ENCODE measurements at regions of chr4 and their contacts with region 1.

Region 1: GRCh38 chr4:10582059-10582686 is 102.4 kb downstream of the CLNK start:
- DNase-seq: peak; percentile 69
- ATAC-seq: peak; percentile 82
- H3K4me3 ChIP-seq: no peak overlapping the region
- H3K27ac ChIP-seq: no peak overlapping the region
- H3K4me1 ChIP-seq: no peaks in the 10 kb centered on the region
- H3K27me3 ChIP-seq: peaks cover 4% of the 10 kb centered on the region
- CTCF ChIP-seq: peak; percentile 99
- POLR2A ChIP-seq: 0 out of 2 replicates have a peak, but pooled peaks have one; percentile 35
- RAD21 ChIP-seq: peak; percentile 99

Region 2: GRCh38 chr4:10212400-10212799 is 369.8 kb before region 1 on chr4:
- CTCF ChIA-PET with region 1: no interaction called
- POLR2A ChIA-PET with region 1: no interaction called
- dilution Hi-C with region 1: no loop called
- in situ Hi-C with region 1: no loop called
- intact Hi-C with region 1: no loop called
- DNase-seq: no peak
- ATAC-seq: no peak
- H3K4me3 ChIP-seq: no peak overlapping the region
- H3K27ac ChIP-seq: no peak overlapping the region
- H3K4me1 ChIP-seq: no peaks in the 10 kb centered on the region
- H3K27me3 ChIP-seq: no peaks in the 10 kb centered on the region
- CTCF ChIP-seq: no peak
- POLR2A ChIP-seq: no peak
- RAD21 ChIP-seq: no peak

Region 3: GRCh38 chr4:10593130-10593529 is 11.0 kb after region 1 on chr4:
- CTCF ChIA-PET with region 1: no interaction called
- POLR2A ChIA-PET with region 1: no interaction called
- dilution Hi-C with region 1: no loop called
- in situ Hi-C with region 1: no loop called
- intact Hi-C with region 1: no loop called
- DNase-seq: no peak
- ATAC-seq: no peak
- H3K4me3 ChIP-seq: no peak overlapping the region
- H3K27ac ChIP-seq: no peak overlapping the region
- H3K4me1 ChIP-seq: peaks cover 3% of the 10 kb centered on the region; the same call in 1 of the 2 replicates
- H3K27me3 ChIP-seq: no peaks in the 10 kb centered on the region
- CTCF ChIP-seq: no peak
- POLR2A ChIP-seq: no peak
- RAD21 ChIP-seq: no peak

Region 4: GRCh38 chr4:10762561-10762960 is 180.4 kb after region 1 on chr4:
- CTCF ChIA-PET with region 1: no interaction called
- POLR2A ChIA-PET with region 1: no interaction called
- dilution Hi-C with region 1: no loop called
- in situ Hi-C with region 1: no loop called
- intact Hi-C with region 1: loop called (anchors 5 kb)
- DNase-seq: peak; percentile 91
- ATAC-seq: peak; percentile 86
- H3K4me3 ChIP-seq: no peak overlapping the region
- H3K27ac ChIP-seq: no peak overlapping the region
- H3K4me1 ChIP-seq: peaks cover 3% of the 10 kb centered on the region
- H3K27me3 ChIP-seq: no peaks in the 10 kb centered on the region
- CTCF ChIP-seq: no peak
- POLR2A ChIP-seq: no peak
- RAD21 ChIP-seq: no peak

Region 5: GRCh38 chr4:10917566-10917965 is 335.4 kb after region 1 on chr4:
- CTCF ChIA-PET with region 1: no interaction called
- POLR2A ChIA-PET with region 1: no interaction called
- dilution Hi-C with region 1: no loop called
- in situ Hi-C with region 1: no loop called
- intact Hi-C with region 1: loop called (anchors 1 kb)
- DNase-seq: no peak
- ATAC-seq: no peak
- H3K4me3 ChIP-seq: no peak overlapping the region
- H3K27ac ChIP-seq: no peak overlapping the region
- H3K4me1 ChIP-seq: no peaks in the 10 kb centered on the region
- H3K27me3 ChIP-seq: no peaks in the 10 kb centered on the region
- CTCF ChIP-seq: no peak
- POLR2A ChIP-seq: no peak
- RAD21 ChIP-seq: no peak

Region 6: DNA sequence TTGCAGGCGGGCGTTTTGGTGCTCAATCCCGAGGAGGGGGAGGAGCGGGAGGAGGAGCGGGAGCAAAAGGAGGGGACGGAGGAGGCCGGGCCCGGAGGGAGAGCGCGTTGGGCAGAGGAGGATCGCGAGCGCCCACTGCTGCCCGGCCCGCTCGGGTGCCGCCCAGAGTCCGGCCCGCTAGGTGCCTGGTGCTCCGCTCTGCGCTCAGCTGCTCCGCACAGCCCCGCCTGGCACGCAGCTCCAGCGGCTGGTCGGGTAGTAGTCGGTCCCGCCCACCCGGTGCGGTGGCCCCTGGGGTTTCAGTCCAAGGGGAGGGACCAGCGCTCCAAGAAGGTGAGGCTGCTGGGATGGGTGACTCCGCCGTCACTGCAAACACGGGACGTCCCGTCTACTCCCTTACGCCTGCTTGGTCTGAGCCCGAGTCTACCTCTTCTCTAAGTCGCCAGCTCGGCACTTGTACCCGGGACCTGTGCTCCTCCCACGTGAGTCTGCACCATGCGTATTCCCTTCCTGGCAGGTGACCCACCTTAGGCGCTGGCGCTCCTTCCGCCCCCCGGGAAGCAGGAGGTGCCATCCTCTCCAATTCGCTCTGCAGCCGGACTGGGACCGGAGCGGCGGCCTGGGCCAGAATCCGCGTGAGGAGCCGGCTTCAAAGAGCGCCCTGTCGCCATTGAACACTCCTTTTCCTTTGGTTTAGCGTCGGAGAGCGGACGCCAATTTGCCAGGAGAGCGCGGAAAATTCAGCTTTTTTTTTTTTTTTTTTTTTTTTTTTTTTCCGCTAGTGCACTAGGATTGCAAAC is 846.9 kb after region 1 on chr4:
- CTCF ChIA-PET with region 1: no interaction called
- POLR2A ChIA-PET with region 1: no interaction called
- dilution Hi-C with region 1: no loop called
- in situ Hi-C with region 1: no loop called
- intact Hi-C with region 1: loop called (anchors 1 kb)
- DNase-seq: peak; percentile 8
- ATAC-seq: peak; percentile 97
- H3K4me3 ChIP-seq: peak overlapping the region; percentile 17; the same call in 1 of the 2 replicates
- H3K27ac ChIP-seq: no peak overlapping the region
- H3K4me1 ChIP-seq: no peaks in the 10 kb centered on the region
- H3K27me3 ChIP-seq: peaks cover 33% of the 10 kb centered on the region
- CTCF ChIP-seq: peak; percentile 40
- POLR2A ChIP-seq: no peak
- RAD21 ChIP-seq: peak; percentile 42

Region 7: DNA sequence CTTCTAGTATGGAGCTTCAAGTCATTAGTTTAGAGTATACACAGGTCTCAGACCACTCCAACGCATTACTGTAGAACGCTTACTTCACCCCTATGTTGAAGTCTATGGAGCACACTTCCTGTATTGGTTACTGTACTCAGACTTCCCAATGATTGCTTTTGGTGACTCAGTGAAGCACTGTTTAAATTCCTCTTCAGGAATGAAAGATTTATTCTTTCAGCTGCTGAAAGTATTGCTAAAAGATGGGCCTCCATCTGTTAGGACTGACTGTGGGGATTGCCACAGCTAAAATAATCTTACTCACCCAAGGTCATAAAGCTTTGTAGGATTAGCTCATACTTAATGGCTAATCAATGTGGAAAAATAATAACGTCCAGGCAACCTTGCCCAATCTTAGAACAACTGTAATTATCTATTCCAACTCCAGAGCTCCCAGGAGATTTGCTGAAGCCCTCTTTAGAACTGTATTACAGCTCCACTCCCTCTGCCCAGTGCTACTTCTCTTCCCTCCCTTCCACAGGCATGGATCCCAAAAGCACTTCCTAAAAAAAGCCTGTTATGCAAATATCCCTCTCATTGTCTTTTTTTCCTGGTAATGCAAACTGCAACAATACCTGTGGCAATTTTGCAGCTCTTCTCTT is 1128.4 kb after region 1 on chr4:
- CTCF ChIA-PET with region 1: interaction called, 3 read pairs
- POLR2A ChIA-PET with region 1: no interaction called
- dilution Hi-C with region 1: no loop called
- in situ Hi-C with region 1: loop called (anchors 10 kb)
- intact Hi-C with region 1: no loop called
- DNase-seq: peak; percentile 80
- ATAC-seq: peak; percentile 89
- H3K4me3 ChIP-seq: no peak overlapping the region
- H3K27ac ChIP-seq: peak overlapping the region; percentile 4; the same call in 1 of the 2 replicates
- H3K4me1 ChIP-seq: no peaks in the 10 kb centered on the region
- H3K27me3 ChIP-seq: no peaks in the 10 kb centered on the region
- CTCF ChIP-seq: no peak
- POLR2A ChIP-seq: no peak
- RAD21 ChIP-seq: no peak